Ovary (tissue), 10 donors: ENCODE measurements at regions of chr5 and their contacts with region 1.

Region 1: DNA sequence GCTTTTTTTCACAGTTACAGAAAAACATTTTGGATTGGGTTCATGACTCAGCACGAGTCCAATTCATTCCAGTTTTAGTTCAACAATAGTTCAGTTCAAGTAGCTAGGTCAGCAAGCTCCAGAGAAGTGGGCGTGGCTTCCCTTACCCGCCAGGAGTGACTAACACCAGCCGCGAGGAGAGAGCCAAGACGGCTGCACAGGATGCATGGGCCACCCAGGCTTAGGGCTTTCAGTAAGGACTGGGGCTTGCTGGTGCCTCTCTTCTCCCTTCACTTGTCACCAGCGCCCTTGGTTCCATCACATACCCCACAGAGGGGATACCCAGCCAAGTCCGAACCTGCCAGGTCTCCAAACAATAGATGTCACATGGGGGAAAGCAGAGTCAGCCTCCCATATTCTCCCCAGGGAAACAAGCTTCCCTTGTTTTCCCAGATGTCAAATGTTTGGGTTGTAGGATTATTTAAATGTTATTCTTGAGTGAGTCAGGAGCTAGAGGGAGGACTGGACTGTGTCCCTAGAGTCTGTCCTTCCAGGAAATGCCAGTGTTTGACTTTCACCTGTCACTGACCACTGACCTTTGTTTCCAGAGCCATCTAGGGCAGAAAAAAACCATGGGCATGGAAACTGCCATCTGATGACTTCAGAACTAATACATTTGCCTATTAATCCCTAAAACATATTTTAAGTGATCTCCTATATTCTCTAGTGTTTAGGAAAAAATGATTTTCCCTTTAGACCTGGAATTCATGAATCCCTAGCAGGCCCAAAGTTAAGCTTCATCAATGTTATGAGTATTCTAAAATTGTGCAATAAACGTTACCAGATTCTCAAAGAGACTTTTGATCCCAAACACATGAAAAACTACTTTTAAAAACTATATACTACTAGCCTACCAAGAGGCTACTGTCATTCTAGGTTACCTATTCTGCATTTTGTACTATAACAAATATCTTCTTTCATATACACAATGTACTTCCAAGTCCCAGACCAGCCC is 51.9 kb downstream of the NIPAL4 start:
- DNase-seq: peak; percentile 93 to 97 (median 96)
- H3K4me3 ChIP-seq: no peak overlapping the region
- H3K27ac ChIP-seq: peak overlapping the region in 1 of 2 donors; percentile 51
- H3K4me1 ChIP-seq: peaks cover 17% of the 10 kb centered on the region
- H3K27me3 ChIP-seq: no peaks in the 10 kb centered on the region
- CTCF ChIP-seq: no peak
- EP300 ChIP-seq: no peak
- POLR2A ChIP-seq: no peak

Region 2: GRCh38 chr5:157100140-157100679 is 411.7 kb before region 1 on chr5:
- intact Hi-C with region 1: no loop called
- DNase-seq: no peak
- H3K4me3 ChIP-seq: no peak overlapping the region
- H3K27ac ChIP-seq: no peak overlapping the region
- H3K4me1 ChIP-seq: no peaks in the 10 kb centered on the region
- H3K27me3 ChIP-seq: no peaks in the 10 kb centered on the region
- CTCF ChIP-seq: no peak
- EP300 ChIP-seq: no peak
- POLR2A ChIP-seq: no peak

Region 3: GRCh38 chr5:157328277-157328912 is 183.6 kb before region 1 on chr5:
- intact Hi-C with region 1: no loop called
- DNase-seq: peak; percentile 55 to 69 (median 61)
- H3K4me3 ChIP-seq: peak overlapping the region; percentile 2
- H3K27ac ChIP-seq: no peak overlapping the region
- H3K4me1 ChIP-seq: peaks cover 2% of the 10 kb centered on the region
- H3K27me3 ChIP-seq: no peaks in the 10 kb centered on the region
- CTCF ChIP-seq: peak; percentile 74 to 95 (median 74)
- EP300 ChIP-seq: no peak
- POLR2A ChIP-seq: no peak

Region 4: GRCh38 chr5:157378502-157378901 is 133.4 kb before region 1 on chr5:
- intact Hi-C with region 1: no loop called
- DNase-seq: no peak
- H3K4me3 ChIP-seq: no peak overlapping the region
- H3K27ac ChIP-seq: no peak overlapping the region
- H3K4me1 ChIP-seq: no peaks in the 10 kb centered on the region
- H3K27me3 ChIP-seq: no peaks in the 10 kb centered on the region
- CTCF ChIP-seq: no peak
- EP300 ChIP-seq: no peak
- POLR2A ChIP-seq: no peak

Region 5: DNA sequence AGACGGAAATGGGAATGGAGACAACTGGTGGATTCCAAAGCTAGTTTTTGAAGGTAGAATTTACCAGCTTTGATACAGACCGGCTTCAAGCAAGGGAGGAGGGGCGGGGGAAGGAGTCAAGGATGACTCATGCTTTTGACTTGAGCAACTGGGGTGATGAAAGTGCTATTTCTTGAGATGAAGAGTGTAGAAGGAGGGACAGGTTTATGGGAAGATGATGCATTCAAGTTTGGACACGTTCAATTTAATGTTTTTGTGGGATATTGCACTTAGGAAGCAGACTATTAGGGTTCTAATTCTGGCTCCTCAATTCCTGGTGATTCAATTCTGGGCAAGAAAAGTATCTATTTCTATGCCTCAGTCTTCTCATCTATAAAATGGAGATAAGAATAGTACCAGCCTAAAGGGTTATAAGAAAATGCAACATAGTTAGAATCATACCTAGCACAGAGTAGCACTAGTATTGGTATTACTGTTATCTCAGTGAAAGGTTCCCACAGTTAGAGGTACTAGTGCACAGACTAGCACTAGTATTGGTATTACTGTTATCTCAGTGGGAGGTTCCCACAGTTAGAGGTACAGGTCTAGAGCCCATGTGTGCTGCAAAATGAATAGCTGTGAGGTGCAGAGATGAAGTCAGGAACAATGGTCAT is 47.3 kb before region 1 on chr5:
- intact Hi-C with region 1: no loop called
- DNase-seq: peak in 1 of 5 donors; percentile 31
- H3K4me3 ChIP-seq: no peak overlapping the region
- H3K27ac ChIP-seq: no peak overlapping the region
- H3K4me1 ChIP-seq: peaks cover 3% of the 10 kb centered on the region
- H3K27me3 ChIP-seq: no peaks in the 10 kb centered on the region
- CTCF ChIP-seq: no peak
- EP300 ChIP-seq: no peak
- POLR2A ChIP-seq: no peak

Region 6: GRCh38 chr5:157575381-157576020 is 63.6 kb after region 1 on chr5 and contains the start of gene ADAM19:
- intact Hi-C with region 1: loop called in 1 of 4 experiments (anchors 10 kb)
- DNase-seq: peak; percentile 47 to 80 (median 66)
- H3K4me3 ChIP-seq: peak within 1 kb of the TSS; percentile 74
- H3K27ac ChIP-seq: peak within 1 kb of the TSS; percentile 19 to 81
- H3K4me1 ChIP-seq: peaks cover 9% of the 10 kb centered on the region
- H3K27me3 ChIP-seq: no peaks in the 10 kb centered on the region
- CTCF ChIP-seq: peak in 2 of 3 donors; percentile 24 to 25
- EP300 ChIP-seq: no peak
- POLR2A ChIP-seq: peak; percentile 11
- total RNA-seq, gene ADAM19: 1.7 to 11.6 (median 3.0) TPM